HepG2 (cell line): ENCODE measurements at regions of chr2 and their contacts with region 1.

Region 1: GRCh38 chr2:197851451-197851850 is 47.1 kb downstream of the PLCL1 start:
- DNase-seq: peak; percentile 11
- ATAC-seq: peak; percentile 75
- H3K4me3 ChIP-seq: no peak overlapping the region
- H3K27ac ChIP-seq: no peak overlapping the region
- H3K4me1 ChIP-seq: no peaks in the 10 kb centered on the region
- H3K27me3 ChIP-seq: no peaks in the 10 kb centered on the region
- CTCF ChIP-seq: no peak
- EP300 ChIP-seq: no peak
- POLR2A ChIP-seq: no peak
- RAD21 ChIP-seq: no peak

Region 2: GRCh38 chr2:197813093-197813787 is 38.2 kb before region 1 on chr2:
- CTCF ChIA-PET with region 1: no interaction called
- POLR2A ChIA-PET with region 1: no interaction called
- in situ Hi-C with region 1: no loop called
- intact Hi-C with region 1: no loop called
- DNase-seq: peak; percentile 68
- ATAC-seq: peak; percentile 90
- H3K4me3 ChIP-seq: no peak overlapping the region
- H3K27ac ChIP-seq: no peak overlapping the region
- H3K4me1 ChIP-seq: no peaks in the 10 kb centered on the region
- H3K27me3 ChIP-seq: peaks cover 0 to 11% of the 10 kb centered on the region in 2 experiments; a peak in 1 of 5 replicates
- CTCF ChIP-seq: peak; percentile 58
- EP300 ChIP-seq: no peak
- POLR2A ChIP-seq: no peak
- RAD21 ChIP-seq: no peak

Region 3: DNA sequence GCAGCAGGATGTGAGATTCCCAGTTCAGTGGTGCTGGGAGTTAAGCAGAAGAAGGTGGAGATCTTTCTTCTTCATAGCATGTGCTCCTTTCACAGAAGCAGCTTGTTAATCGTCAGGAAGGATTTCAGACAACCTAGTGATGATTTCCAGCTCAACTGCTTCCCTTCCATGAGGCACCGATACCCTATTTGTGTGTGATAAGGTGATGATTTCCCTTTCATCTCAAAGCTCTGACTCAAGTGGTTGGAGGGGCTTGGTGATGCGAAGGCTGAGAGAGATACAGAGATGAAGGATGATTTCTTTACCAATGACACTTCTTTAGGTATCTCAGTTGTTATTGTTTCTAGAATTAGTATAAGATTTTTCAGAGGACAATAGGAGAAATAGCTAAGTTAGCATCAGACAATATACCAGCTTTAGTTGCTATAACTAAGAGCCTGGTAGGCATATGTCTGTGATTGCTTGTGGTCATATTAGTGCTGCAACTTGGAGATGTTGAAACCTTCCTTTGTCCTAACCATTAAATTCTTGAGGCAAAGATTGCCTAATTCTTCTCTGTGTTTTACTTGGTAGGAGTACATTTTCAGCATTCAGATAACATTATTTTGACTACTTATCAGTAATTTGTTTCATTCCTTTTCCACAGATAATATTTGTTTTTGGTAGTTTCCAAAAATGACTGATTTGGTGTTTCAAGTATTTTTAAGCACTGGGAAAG is 64.3 kb after region 1 on chr2:
- CTCF ChIA-PET with region 1: no interaction called
- POLR2A ChIA-PET with region 1: no interaction called
- in situ Hi-C with region 1: no loop called
- intact Hi-C with region 1: no loop called
- DNase-seq: no peak
- ATAC-seq: no peak
- H3K4me3 ChIP-seq: no peak overlapping the region
- H3K27ac ChIP-seq: no peak overlapping the region
- H3K4me1 ChIP-seq: no peaks in the 10 kb centered on the region
- H3K27me3 ChIP-seq: no peaks in the 10 kb centered on the region
- CTCF ChIP-seq: no peak
- EP300 ChIP-seq: no peak
- POLR2A ChIP-seq: no peak
- RAD21 ChIP-seq: no peak

Region 4: DNA sequence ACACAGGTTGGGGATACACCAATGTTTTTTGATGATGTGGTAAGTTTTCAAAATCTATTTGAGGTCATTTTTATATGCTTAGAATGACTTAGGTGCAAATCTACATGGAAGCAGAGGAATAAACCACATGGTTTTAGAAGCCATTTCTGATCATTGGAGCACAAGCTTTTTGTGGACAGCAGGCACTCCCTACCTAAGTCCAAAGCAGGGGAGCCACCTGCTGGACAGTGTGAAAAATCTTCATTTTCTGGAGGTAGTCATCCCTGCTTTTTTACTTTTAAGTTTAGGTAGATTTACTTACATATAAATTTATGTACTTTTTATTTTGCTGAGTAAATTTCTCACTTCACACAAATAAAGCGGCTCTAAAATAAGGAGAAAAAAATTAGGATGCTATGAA is 276.2 kb after region 1 on chr2:
- CTCF ChIA-PET with region 1: no interaction called
- POLR2A ChIA-PET with region 1: no interaction called
- in situ Hi-C with region 1: no loop called
- intact Hi-C with region 1: loop called (anchors 1 kb)
- DNase-seq: peak; percentile 56
- ATAC-seq: peak; percentile 93
- H3K4me3 ChIP-seq: no peak overlapping the region
- H3K27ac ChIP-seq: no peak overlapping the region
- H3K4me1 ChIP-seq: peaks cover 5% of the 10 kb centered on the region; the same call in 1 of the 2 replicates
- H3K27me3 ChIP-seq: no peaks in the 10 kb centered on the region
- CTCF ChIP-seq: peak; percentile 76
- EP300 ChIP-seq: no peak
- POLR2A ChIP-seq: no peak
- RAD21 ChIP-seq: no peak